Activated T-helper 2 cell treated with anti-CD3 and anti-CD28 coated beads, Interferon-gamma antibody, Interleukin-2, Interleukin-4, amounts not matched to agents 10 μg/mL and 5 μg/mL and 100 μg/mL, durations not matched to agents 14 hours and 24 hours and 36 hours (primary cell): ENCODE measurements at regions of chr10 and their contacts with region 1.

Region 1: DNA sequence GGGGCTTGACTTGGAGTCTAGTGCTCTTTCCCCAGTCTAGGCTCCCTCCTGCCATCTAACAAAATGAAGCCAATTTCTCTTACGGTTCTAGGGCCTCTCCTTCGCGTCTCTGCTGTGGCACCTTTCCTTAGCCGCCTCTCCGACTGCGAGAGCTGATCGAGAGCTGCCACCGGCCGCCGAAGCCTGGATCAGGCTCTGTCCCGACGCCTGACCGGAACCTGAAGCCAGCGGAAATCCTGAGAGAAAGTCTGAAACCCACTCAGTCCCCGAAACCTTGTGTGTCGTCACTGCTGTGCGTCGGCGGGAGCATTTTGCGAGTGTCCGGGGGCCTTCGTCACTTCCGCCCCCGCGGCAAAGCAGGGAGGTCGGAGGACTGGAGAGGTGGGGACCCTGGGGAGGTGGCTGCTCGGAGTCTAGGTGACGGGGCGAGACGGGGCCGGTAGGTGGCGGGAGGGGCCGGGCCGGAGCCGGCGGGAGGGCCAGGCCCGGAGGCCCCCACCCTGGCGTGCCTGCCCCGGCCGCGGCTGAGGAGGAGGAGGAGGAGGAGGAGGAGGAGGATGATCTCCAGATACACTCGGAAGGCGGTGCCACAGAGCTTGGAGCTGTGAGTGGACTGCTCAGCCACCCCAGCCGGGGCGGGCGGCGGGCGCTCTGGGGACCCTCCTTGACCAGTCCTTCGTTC is at the starts of genes ECD and FAM149B1:
- DNase-seq: peak; percentile 90
- H3K4me3 Mint-ChIP-seq: peak within 1 kb of the TSS; percentile 99
- H3K27ac Mint-ChIP-seq: peak within 1 kb of the TSS; percentile 94
- H3K4me1 Mint-ChIP-seq: peaks cover 33% of the 10 kb centered on the region
- H3K27me3 Mint-ChIP-seq: no peaks in the 10 kb centered on the region
- total RNA-seq, gene ECD: 35.2 and 37.8 TPM in 2 replicates
- total RNA-seq, gene FAM149B1: 13.8 and 14.3 TPM in 2 replicates

Region 2: DNA sequence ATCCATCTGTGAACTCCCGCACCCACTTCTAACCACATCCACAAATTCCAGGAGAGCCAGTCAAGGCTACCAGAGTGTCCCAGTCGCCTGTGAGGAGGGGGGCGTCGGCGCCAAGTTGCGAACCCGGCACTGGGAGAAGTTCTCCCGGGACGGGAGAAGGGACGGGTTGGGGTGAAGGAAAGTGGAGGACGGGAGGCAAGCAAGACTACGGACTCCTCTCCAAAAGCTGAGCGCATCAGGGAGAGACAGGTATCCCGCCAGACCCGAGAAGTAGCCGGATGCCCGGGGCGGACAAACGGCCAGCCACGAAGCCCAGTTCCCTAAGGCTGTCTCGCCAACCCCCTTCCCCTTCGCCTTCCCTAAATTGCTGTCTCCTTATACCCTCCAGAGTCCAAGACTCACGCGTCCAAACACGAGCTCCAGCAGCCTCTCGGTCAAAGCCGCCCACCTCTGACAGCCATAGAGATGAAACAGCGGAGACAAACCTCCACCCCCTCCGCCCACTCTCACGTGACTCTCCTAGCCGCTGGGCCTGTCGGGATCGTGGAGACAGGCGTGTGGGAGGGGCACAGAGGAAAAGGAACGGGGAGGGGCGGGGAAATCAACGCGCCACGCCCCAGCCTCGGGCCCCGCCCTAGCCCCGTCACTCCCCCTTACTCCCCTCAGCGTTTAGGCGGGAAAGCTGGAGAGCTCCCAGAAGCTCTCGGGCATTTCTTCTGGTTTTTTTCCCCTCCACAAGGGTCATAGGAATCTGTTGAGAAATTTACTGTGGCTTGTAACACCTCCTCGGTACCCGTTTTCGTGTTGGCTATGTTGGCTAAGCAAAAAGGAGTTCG is 542.1 kb before region 1 on chr10 and contains the start of gene MICU1:
- intact Hi-C with region 1: loop called (anchors 2 kb)
- DNase-seq: peak; percentile 93
- H3K4me3 Mint-ChIP-seq: peak within 1 kb of the TSS; percentile 99
- H3K27ac Mint-ChIP-seq: peak within 1 kb of the TSS; percentile 93
- H3K4me1 Mint-ChIP-seq: peaks cover 14% of the 10 kb centered on the region
- H3K27me3 Mint-ChIP-seq: no peaks in the 10 kb centered on the region
- total RNA-seq, gene MICU1: 30.0 and 30.7 TPM in 2 replicates

Region 3: DNA sequence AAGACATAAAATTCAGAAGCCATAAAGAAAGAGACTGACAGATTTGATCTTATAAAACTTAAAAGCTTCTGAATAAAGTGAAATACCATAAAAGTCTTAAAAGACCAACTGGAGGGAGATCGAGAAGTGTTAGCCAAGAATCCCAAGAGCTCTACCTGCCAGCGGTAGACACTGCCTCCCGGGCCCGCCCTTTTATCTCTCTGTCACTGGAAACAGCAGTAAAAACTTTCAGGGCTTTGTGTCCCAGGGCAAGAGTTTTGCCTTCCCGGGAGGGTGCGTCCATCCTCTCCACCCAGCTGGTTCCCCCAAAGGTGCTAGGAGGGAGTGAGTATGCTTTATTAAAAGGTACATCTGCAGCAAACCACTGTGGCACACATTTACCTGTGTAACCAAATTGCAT is 219.2 kb before region 1 on chr10:
- intact Hi-C with region 1: no loop called
- DNase-seq: no peak
- H3K4me3 Mint-ChIP-seq: no peak overlapping the region
- H3K27ac Mint-ChIP-seq: no peak overlapping the region
- H3K4me1 Mint-ChIP-seq: no peaks in the 10 kb centered on the region
- H3K27me3 Mint-ChIP-seq: peaks cover 12% of the 10 kb centered on the region

Region 4: DNA sequence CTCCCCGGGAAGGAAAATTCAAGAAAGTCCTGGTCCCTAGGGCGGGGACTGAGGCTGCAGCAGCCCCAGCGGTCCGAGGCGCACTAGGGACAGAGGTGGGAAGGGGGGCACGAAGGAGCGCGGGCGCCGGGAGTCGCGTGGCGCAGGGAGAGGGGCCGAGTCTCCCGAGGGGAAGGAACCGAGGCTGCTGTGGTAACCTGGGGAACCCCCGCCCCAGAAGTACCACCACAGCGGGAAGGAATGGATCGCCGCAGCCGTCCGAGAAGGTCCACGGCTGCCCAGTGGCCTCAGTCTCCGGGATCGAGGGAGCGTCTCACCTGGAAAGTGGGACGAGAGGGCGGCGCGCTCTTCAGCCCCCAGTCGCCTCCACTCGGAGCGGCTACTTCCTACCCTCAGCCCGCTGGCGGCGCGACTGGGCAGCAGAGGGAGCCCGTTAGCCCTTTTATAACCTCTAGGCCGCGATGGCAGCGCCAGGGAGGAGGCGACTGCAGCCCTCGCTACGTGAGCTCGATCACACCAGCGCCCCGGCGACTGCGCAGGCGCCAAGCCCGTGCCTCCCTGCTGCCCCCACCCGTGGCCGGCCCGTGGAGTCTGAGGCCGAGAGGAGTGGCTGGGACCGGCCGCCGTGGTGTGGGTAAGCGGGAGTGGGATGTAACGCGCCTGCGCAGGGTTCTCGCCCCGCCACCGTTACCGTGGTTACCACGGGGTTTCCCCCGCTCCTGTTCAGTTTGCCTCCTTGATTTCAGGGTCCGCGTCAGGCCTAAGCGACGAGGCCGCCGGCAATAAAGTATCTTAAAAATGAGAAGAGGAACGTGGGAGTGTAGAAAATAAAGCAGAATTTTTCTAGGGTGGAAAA is 71.2 kb before region 1 on chr10 and contains the start of gene P4HA1:
- intact Hi-C with region 1: loop called (anchors 1 kb)
- DNase-seq: peak; percentile 97
- H3K4me3 Mint-ChIP-seq: peak within 1 kb of the TSS; percentile 89
- H3K27ac Mint-ChIP-seq: peak within 1 kb of the TSS; percentile 90
- H3K4me1 Mint-ChIP-seq: peaks cover 31% of the 10 kb centered on the region
- H3K27me3 Mint-ChIP-seq: no peaks in the 10 kb centered on the region
- total RNA-seq, gene P4HA1: 71.9 and 72.8 TPM in 2 replicates

Region 5: DNA sequence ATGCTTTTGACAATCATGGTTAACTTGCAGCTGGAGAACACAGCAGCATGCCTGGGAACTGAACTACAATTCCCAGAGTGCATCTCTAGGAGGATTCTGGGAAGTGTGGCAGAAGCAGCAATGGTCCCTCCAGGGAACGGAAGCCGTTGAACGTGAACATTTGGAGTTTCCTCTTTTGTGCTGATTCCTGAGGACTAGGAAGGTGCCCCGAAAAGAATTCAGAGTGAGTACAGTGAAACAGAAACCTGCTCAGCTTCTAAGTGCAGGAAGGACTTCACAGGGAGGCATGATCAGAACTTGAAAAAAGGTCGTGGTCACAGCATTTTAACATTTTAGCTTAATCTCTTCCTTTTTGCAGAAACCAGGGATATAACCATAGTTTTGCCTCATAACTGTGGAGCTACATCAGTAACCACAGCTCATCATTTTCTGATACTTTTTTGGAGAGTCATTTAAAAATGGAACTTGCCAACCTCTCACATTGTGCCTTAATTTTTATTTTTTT is 57.5 kb before region 1 on chr10 and contains the start of gene NUDT13:
- intact Hi-C with region 1: loop called (anchors 5 kb)
- DNase-seq: peak; percentile 22
- H3K4me3 Mint-ChIP-seq: peak within 1 kb of the TSS; percentile 76
- H3K27ac Mint-ChIP-seq: peak within 1 kb of the TSS; percentile 88
- H3K4me1 Mint-ChIP-seq: peaks cover 10% of the 10 kb centered on the region
- H3K27me3 Mint-ChIP-seq: no peaks in the 10 kb centered on the region
- total RNA-seq, gene NUDT13: 0.76 and 1.0 TPM in 2 replicates

Region 6: DNA sequence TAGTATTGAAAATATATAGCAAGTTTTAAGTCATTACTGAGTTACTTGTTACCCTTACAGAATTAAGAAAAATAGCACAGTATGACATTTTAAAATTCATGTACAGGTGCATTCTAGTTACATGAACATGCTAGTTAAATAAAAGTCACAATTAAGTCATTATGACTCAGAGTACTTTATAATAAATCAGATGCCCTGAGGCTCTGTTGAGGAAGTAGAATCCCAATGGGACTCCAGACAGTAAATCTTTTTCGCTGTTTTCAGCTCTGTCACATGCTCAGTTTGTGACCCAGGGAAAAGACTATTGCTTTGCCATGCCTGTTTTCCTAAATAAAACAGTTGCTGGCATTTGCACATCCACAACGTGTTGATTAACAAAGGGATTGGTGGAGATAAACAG is 36.6 kb before region 1 on chr10:
- intact Hi-C with region 1: no loop called
- DNase-seq: no peak
- H3K4me3 Mint-ChIP-seq: no peak overlapping the region
- H3K27ac Mint-ChIP-seq: no peak overlapping the region
- H3K4me1 Mint-ChIP-seq: no peaks in the 10 kb centered on the region
- H3K27me3 Mint-ChIP-seq: no peaks in the 10 kb centered on the region

Region 7: GRCh38 chr10:73234695-73235094 is 66.8 kb after region 1 on chr10:
- intact Hi-C with region 1: no loop called
- DNase-seq: no peak
- H3K4me3 Mint-ChIP-seq: no peak overlapping the region
- H3K27ac Mint-ChIP-seq: no peak overlapping the region
- H3K4me1 Mint-ChIP-seq: no peaks in the 10 kb centered on the region
- H3K27me3 Mint-ChIP-seq: no peaks in the 10 kb centered on the region

Region 8: DNA sequence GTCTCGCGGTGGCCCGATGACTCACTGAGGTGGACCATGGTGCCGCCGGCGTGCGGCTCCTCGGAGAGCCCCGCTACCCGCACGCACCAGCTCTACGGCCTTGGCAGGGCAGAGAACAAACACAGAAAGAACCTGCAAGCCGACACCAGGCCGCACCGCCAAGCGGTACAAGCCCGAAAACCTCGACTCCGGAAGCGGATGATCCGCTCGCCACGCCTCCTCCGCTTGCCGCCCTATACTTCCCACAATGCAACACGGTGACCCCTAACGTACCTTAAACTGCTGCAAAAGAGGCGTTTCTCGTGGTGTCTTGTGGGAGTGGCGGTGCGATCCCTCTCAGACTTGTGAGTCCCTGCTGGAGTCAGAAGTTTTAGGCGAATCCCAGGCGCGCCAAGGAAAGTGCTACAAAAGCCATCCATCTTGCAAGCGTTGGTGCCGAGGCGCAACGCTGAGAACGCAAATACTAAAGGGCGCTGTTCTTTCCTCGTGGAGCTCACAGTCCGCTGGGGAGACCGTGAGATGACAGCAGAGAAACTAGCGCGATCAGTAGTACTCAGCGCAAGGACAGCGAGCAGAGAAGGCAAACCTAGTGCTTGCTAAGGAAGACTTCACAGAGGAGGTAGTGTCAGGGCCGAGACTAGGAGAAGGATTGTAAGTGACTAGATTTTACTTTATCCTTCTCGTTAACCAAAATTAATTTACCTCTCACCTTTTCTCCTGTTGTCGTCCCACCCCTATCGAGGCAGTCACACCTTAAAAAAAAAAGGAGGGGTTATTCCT is 84.7 kb after region 1 on chr10 and contains the start of gene MRPS16:
- intact Hi-C with region 1: loop called (anchors 2 kb)
- DNase-seq: peak; percentile 92
- H3K4me3 Mint-ChIP-seq: peak within 1 kb of the TSS; percentile 98
- H3K27ac Mint-ChIP-seq: peak within 1 kb of the TSS; percentile 91
- H3K4me1 Mint-ChIP-seq: peaks cover 29% of the 10 kb centered on the region
- H3K27me3 Mint-ChIP-seq: no peaks in the 10 kb centered on the region
- total RNA-seq, gene MRPS16: 145 and 152 TPM in 2 replicates